Esophagus muscularis mucosa (tissue), 4 donors: ENCODE measurements at regions of chr4 and their contacts with region 1.

Region 1: DNA sequence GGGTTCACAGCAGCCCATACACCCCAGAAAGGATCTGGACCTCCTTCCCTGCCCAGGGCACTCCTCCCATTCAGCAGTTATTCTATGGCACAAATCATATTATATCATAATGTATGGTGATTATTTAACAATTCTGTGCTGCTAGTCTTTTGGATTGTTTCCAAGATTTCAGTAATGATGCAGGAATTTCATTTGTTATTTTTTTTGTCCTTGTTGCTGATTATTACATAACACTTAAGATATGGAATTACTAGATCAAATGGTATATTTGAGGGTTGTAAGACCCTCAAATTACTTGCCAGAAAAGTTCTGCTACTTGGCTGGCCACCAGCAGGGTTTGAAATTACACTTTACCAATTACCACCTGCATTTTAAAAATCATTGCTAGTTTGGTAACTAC is 36.4 kb downstream of the QDPR start:
- DNase-seq: no peak
- H3K4me3 ChIP-seq: no peak overlapping the region
- H3K27ac ChIP-seq: no peak overlapping the region
- H3K4me1 ChIP-seq: no peaks in the 10 kb centered on the region
- H3K27me3 ChIP-seq: no peaks in the 10 kb centered on the region
- CTCF ChIP-seq: no peak
- EP300 ChIP-seq: no peak
- POLR2A ChIP-seq: no peak

Region 2: GRCh38 chr4:16289897-16290554 is 1185.5 kb before region 1 on chr4:
- intact Hi-C with region 1: loop called (anchors 10 kb)
- DNase-seq: no peak
- H3K4me3 ChIP-seq: no peak overlapping the region
- H3K27ac ChIP-seq: no peak overlapping the region
- H3K4me1 ChIP-seq: peaks cover 5 to 8% (median 7%) of the 10 kb centered on the region in 4 donors
- H3K27me3 ChIP-seq: peaks cover 0 to 14% (median 0%) of the 10 kb centered on the region in 4 donors
- CTCF ChIP-seq: peak; percentile 53 to 63 (median 61)
- EP300 ChIP-seq: no peak
- POLR2A ChIP-seq: no peak

Region 3: GRCh38 chr4:17400686-17401085 is 74.8 kb before region 1 on chr4:
- intact Hi-C with region 1: no loop called
- DNase-seq: no peak
- H3K4me3 ChIP-seq: no peak overlapping the region
- H3K27ac ChIP-seq: no peak overlapping the region
- H3K4me1 ChIP-seq: no peaks in the 10 kb centered on the region
- H3K27me3 ChIP-seq: no peaks in the 10 kb centered on the region
- CTCF ChIP-seq: no peak
- EP300 ChIP-seq: no peak
- POLR2A ChIP-seq: no peak